CD8-positive, alpha-beta memory T cell (primary cell): ENCODE measurements at regions of chr6 and their contacts with region 1.

Region 1: DNA sequence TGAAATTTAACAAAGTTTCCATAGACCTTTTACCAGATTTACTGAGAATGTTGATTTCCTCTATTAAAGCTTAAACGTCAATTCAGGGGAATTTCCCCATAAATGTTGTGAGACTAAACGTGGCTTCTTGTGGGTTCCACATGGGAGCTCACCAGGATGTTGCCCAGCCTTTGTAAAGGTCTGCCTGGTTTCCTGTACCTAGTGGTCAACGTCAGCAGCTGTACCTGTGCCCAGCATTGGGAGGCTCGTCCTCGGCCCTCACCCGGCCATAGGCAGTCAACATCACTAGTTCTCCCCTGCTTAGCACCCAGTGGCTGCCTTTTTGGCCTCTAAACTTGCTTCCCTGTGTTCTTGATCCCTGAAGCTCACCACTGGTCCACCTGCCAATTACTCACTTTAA is 22.1 kb upstream of the CD83 start:
- DNase-seq: no peak
- H3K4me3 ChIP-seq: no peak overlapping the region
- H3K4me3 Mint-ChIP-seq: no peak overlapping the region
- H3K27ac ChIP-seq: no peak overlapping the region
- H3K27ac Mint-ChIP-seq: peak overlapping the region in 1 of 8 donors; percentile 29
- H3K4me1 ChIP-seq: no peaks in the 10 kb centered on the region
- H3K4me1 Mint-ChIP-seq: peaks cover 3 to 15% (median 6%) of the 10 kb centered on the region in 3 donors
- H3K27me3 ChIP-seq: no peaks in the 10 kb centered on the region
- H3K27me3 Mint-ChIP-seq: peaks cover 2 to 20% of the 10 kb centered on the region in 2 donors

Region 2: DNA sequence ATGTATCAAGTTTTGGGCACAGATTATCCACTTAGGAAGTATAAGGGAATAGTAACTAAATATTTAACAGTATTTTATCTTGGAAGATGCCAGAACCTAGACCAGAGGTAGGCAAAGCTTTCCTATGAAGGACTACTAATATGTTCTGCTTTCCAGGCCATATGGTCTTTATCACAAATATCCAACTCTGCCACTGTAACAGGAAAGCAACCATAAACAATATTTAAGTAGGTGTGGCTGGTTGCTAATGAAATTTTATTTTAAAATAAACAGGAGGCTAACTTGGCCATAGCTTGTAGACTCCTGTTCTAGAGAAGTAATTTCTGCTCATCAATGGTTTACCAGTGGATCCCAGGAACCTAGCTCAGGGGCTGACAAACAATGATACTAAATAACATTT is 440.9 kb before region 1 on chr6:
- CTCF ChIA-PET with region 1: no interaction called
- POLR2A ChIA-PET with region 1: interaction called, 10 read pairs
- DNase-seq: no peak
- H3K4me3 ChIP-seq: no peak overlapping the region
- H3K4me3 Mint-ChIP-seq: no peak overlapping the region
- H3K27ac ChIP-seq: no peak overlapping the region
- H3K27ac Mint-ChIP-seq: peak overlapping the region in 1 of 8 donors; percentile 52
- H3K4me1 ChIP-seq: no peaks in the 10 kb centered on the region
- H3K4me1 Mint-ChIP-seq: peaks cover 34 to 48% (median 44%) of the 10 kb centered on the region in 3 donors
- H3K27me3 ChIP-seq: no peaks in the 10 kb centered on the region
- H3K27me3 Mint-ChIP-seq: no peaks in the 10 kb centered on the region